ENCODE measurements at regions of chr12 and their contacts with region 1.

Region 1: DNA sequence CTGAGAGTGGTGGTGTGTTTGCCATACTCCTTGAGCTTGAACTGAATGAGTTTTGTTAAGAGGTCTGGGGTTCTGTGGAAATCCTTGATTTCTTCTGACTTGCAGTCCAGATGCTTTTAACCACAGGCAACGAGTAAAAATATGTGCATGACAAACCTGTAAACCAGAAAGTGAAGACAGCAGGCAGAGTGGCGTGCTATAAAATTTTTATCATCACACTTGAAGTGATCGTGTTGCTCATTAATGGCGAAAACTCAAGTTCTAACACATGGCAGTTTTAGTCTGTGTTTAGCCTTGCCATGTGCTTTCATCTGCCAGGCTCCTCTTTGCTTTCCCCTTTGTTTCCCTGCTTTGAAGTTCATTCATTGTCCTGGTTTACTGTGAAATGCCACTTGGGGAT is 28.0 kb downstream of the TXNRD1 start:
- DNase-seq: no peak
- ATAC-seq: no peak
- H3K4me3 ChIP-seq: no peak overlapping the region
- H3K27ac ChIP-seq: peak overlapping the region; percentile 84
- H3K4me1 ChIP-seq: peaks cover 41% of the 10 kb centered on the region
- H3K27me3 ChIP-seq: no peaks in the 10 kb centered on the region
- CTCF ChIP-seq: no peak

Region 2: GRCh38 chr12:104258476-104259067 is 15.0 kb after region 1 on chr12:
- CTCF ChIA-PET with region 1: no interaction called
- POLR2A ChIA-PET with region 1: interaction called, 16 read pairs
- in situ Hi-C with region 1: no loop called
- intact Hi-C with region 1: no loop called
- DNase-seq: no peak
- ATAC-seq: no peak
- H3K4me3 ChIP-seq: no peak overlapping the region
- H3K27ac ChIP-seq: peak overlapping the region; percentile 74
- H3K4me1 ChIP-seq: peaks cover 31% of the 10 kb centered on the region
- H3K27me3 ChIP-seq: no peaks in the 10 kb centered on the region
- CTCF ChIP-seq: no peak

Region 3: DNA sequence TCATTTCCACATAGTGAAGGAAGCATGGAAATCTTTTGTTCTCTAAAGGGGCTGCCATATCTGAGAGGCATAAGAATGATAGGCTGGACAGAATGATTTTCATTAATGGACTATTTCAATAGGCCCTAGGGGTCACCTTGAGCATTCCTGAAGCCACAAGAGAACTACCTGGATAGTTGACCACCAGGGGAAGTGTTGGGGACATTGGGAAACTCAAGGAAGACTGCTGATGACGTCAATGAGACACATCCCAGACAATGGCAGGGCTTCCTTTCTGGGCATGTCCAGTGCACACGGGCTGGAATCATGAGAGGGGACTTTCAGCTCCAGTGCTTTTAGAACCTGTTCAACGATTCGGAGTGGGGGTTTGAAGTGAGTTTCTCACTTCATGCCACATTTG is 164.4 kb after region 1 on chr12:
- CTCF ChIA-PET with region 1: no interaction called
- POLR2A ChIA-PET with region 1: no interaction called
- in situ Hi-C with region 1: no loop called
- intact Hi-C with region 1: no loop called
- DNase-seq: no peak
- ATAC-seq: no peak
- H3K4me3 ChIP-seq: no peak overlapping the region
- H3K27ac ChIP-seq: no peak overlapping the region
- H3K4me1 ChIP-seq: peaks cover 4% of the 10 kb centered on the region; the same call in 1 of the 2 replicates
- H3K27me3 ChIP-seq: no peaks in the 10 kb centered on the region
- CTCF ChIP-seq: no peak

Region 4: DNA sequence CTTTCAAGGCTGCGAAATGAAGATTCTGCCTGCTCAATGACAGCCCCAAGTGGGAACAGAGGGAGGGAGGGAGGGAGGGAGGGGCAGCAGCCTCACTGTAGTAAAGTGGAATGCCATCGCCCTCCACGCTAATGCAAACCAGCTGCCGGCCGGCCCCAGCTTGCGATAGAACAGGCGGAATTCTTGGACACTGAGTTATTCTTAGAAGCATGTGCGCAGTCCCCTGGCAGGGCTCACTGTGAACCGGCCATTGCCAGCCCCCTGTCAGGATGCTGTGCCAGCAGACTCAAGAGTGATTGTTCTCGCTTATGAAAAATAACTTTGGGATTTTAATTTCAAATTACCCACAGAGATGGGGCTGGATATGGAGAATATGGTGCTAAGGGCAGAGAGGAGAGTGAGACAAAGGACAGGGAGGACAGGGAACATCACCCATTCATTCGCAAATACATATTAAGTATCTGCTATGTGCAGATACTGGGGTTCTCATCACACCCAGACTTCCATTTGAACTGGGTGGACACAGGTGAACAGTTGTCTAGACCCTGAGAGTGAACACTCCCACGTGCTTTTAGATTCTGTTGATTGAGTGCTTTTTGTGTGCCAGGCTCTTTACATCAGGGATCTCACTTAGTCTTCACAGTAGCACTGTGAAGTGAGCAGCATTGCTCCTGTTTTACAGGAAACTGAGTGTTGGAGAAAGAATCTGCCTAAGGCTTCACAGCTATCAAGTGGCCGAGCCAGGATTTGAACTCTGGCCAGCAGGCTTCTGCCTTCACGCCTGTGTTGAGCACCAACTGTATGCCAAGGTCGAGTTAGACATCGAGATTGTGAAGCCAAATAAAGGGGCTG is 1279.8 kb after region 1 on chr12:
- CTCF ChIA-PET with region 1: no interaction called
- POLR2A ChIA-PET with region 1: no interaction called
- in situ Hi-C with region 1: no loop called
- intact Hi-C with region 1: no loop called
- DNase-seq: no peak
- ATAC-seq: no peak
- H3K4me3 ChIP-seq: no peak overlapping the region
- H3K27ac ChIP-seq: no peak overlapping the region
- H3K4me1 ChIP-seq: no peaks in the 10 kb centered on the region
- H3K27me3 ChIP-seq: no peaks in the 10 kb centered on the region
- CTCF ChIP-seq: no peak

Measured in Panc1 (cell line).